Activated CD4-positive, alpha-beta T cell treated with anti-CD3 and anti-CD28 coated beads for 36 hours (primary cell): ENCODE measurements at regions of chr22 and their contacts with region 1.

Region 1: GRCh38 chr22:41367039-41367679 is 14.6 kb upstream of the TEF start:
- DNase-seq: peak; percentile 42
- ATAC-seq: peak; percentile 63
- H3K4me3 Mint-ChIP-seq: no peak overlapping the region
- H3K27ac Mint-ChIP-seq: no peak overlapping the region
- H3K4me1 Mint-ChIP-seq: no peaks in the 10 kb centered on the region
- H3K27me3 Mint-ChIP-seq: no peaks in the 10 kb centered on the region

Region 2: DNA sequence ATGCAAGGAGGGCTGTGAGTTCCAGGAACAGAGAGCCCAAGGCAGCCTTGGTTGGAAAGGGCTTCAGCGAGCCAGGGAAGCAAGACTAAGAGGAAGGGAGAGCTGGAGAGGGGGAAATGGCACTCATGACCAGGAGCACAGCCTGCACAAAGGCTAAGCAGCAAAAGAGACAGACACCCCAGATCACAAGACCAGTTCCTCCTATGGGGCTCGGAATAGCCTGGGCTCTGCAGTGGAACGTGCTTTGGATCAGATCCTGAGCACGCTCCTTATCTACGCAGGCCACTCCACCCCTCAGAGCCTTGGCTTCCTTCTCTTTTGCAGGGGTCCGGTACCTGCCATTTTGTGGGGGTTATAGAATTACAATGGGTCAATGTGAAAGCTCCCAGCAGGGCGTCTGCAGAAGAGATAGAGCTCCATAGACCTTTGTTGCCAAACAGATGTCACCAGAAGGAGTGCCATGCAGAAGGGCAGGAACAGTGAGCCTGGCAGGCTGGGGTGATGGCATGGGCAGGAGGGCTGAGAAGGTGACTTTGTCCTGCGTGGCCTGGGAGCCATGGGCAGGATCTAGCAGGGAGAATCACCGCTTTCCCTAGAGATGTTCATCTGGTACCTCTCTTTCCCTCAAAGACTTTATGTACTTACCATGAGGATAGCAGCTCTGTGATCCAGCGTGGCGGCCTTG is 32.1 kb before region 1 on chr22:
- CTCF ChIA-PET with region 1: no interaction called
- POLR2A ChIA-PET with region 1: interaction called, 11 read pairs
- intact Hi-C with region 1: no loop called
- DNase-seq: no peak
- ATAC-seq: no peak
- H3K4me3 Mint-ChIP-seq: no peak overlapping the region
- H3K27ac Mint-ChIP-seq: no peak overlapping the region
- H3K4me1 Mint-ChIP-seq: peaks cover 8% of the 10 kb centered on the region
- H3K27me3 Mint-ChIP-seq: no peaks in the 10 kb centered on the region